Heart right ventricle (tissue), 16 donors: ENCODE measurements at regions of chr16 and their contacts with region 1.

Region 1: DNA sequence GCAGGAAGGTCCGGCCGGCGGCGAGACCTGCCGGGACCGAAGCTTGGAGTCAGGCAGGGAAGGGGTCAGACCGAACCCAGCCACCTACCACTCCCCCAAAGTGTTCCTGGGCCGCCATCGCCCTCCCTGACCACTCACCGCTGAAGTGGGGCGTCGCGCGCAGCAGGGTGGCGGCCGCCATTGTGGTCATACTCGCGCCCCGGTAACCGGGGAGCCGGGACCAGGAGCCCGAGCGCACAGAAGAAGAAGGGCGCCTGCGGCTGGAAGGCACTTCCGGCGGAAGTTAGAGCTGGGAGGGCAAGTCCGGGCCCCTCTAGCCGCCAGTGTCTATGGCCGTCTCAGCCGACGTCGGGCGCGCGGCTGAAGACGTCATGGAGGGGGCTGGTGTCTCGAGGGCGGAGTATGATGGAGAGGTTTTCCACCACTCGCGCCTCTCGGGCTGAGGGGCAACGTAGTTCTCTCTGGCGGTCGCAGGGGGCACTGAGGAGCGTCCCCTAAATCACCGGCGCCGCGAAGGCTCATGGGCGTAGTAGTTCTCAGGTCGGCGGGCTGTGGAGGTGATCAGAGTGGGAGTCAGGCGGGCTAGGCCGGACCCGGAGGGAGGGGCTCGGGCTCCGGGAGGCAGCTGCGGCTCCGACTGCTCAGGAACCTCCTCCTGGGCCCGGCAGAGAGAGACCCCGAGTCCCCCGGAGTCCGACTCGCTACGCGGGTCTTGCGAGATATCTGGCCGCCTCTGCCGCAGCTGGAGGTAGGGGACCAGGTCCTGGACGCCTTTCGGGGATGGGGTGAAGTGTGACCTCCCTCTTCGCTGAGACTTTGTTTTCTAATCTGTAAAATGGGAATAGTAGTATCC is at the start of gene TUFM:
- DNase-seq: peak; percentile 98 to 99
- ATAC-seq: peak; percentile 98 to 99 (median 99)
- H3K4me3 ChIP-seq: peak within 1 kb of the TSS; percentile 79 to 94 (median 86)
- H3K27ac ChIP-seq: peak within 1 kb of the TSS; percentile 48 to 90 (median 88)
- H3K4me1 ChIP-seq: peaks cover 5 to 27% (median 23%) of the 10 kb centered on the region in 9 donors
- H3K27me3 ChIP-seq: no peaks in the 10 kb centered on the region
- CTCF ChIP-seq: peak; percentile 34 to 86 (median 80)
- total RNA-seq, gene TUFM: 193 to 250 (median 236) TPM

Region 2: DNA sequence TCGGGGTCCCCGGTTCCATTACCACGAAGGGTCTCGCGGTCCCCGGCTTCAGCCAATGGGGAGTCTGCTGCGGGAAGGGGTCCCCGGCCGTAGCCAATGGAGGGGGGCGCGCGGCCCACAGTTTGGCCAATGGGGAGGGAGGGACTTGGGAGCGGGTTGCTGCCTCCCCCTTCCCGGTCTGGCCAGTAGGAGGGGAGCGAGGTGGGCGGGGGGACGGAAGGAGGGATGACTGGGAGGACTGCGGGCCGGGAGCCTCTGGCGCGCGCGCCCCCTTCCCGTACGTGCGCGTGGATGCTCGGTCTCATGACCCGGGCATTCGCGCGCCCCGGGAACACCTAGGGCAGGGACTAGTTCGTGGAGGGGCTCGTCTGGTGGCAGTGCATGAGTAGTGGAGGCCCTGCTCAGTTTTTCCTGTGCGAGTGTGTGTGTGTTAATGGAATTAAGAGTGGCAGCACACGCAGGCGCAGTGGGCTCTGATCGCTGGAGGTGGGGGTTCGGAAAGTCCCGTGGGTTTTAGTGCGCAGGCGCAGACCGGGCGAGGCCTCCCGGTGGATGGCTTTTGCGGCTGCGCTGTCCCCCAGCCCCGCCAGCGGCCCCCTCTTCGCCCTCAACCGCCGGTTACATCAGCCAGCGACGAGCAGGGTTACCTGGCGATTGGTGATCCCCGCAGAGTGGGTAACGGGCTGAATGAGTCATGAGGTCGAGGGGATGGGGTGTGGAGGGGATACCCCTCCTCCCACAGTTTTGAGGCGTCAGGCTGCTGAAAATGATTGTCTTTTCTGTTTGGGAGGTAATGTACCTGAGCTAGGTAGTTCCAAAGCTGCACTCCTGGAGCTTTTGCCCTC is 22.2 kb before region 1 on chr16:
- intact Hi-C with region 1: loop called in 5 of 10 experiments (anchors 1 to 2 kb)
- DNase-seq: peak; percentile 97 to 99
- ATAC-seq: peak; percentile 92 to 97 (median 95)
- H3K4me3 ChIP-seq: peak overlapping the region; percentile 79 to 100 (median 100)
- H3K27ac ChIP-seq: peak overlapping the region; percentile 92 to 100 (median 100)
- H3K4me1 ChIP-seq: peaks cover 8 to 34% (median 23%) of the 10 kb centered on the region in 9 donors
- H3K27me3 ChIP-seq: no peaks in the 10 kb centered on the region
- CTCF ChIP-seq: peak in 7 of 9 donors; percentile 24 to 49 (median 39)

Region 3: DNA sequence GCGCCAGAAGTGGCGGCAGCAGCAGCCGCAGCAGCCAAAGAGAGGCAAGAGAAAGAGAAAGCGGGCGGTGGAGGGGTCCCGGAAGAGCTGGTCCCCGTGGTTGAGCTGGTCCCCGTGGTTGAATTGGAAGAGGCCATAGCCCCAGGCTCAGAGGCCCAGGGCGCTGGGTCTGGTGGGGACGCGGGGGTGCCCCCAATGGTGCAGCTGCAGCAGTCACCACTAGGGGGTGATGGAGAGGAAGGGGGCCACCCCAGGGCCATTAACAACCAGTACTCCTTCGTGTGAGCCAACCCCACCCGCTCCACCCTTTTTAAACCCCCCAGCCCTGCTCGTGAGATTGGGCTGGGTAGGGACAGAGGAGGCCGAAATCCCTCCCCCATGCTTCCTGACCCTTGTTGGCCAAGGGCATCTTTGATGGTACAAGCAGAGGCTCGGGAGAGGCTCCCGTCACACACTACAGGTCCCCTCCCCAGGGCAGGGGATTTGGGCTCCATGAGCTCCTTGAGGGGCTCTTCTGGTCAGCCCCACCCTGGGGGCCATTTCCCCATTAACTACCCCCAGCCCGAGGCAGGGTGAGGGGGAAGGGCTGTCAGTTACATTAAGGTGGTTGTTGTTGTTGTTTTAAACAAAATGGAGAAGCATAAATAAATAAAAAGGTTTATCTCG is 27.4 kb after region 1 on chr16:
- intact Hi-C with region 1: loop called in 1 of 10 experiments (anchors 2 kb)
- DNase-seq: no peak
- ATAC-seq: peak in 3 of 8 donors; percentile 11 to 34 (median 26)
- H3K4me3 ChIP-seq: no peak overlapping the region
- H3K27ac ChIP-seq: no peak overlapping the region
- H3K4me1 ChIP-seq: peaks cover 0 to 1% (median 0%) of the 10 kb centered on the region in 9 donors
- H3K27me3 ChIP-seq: no peaks in the 10 kb centered on the region
- CTCF ChIP-seq: peak; percentile 24 to 75 (median 55)

Region 4: DNA sequence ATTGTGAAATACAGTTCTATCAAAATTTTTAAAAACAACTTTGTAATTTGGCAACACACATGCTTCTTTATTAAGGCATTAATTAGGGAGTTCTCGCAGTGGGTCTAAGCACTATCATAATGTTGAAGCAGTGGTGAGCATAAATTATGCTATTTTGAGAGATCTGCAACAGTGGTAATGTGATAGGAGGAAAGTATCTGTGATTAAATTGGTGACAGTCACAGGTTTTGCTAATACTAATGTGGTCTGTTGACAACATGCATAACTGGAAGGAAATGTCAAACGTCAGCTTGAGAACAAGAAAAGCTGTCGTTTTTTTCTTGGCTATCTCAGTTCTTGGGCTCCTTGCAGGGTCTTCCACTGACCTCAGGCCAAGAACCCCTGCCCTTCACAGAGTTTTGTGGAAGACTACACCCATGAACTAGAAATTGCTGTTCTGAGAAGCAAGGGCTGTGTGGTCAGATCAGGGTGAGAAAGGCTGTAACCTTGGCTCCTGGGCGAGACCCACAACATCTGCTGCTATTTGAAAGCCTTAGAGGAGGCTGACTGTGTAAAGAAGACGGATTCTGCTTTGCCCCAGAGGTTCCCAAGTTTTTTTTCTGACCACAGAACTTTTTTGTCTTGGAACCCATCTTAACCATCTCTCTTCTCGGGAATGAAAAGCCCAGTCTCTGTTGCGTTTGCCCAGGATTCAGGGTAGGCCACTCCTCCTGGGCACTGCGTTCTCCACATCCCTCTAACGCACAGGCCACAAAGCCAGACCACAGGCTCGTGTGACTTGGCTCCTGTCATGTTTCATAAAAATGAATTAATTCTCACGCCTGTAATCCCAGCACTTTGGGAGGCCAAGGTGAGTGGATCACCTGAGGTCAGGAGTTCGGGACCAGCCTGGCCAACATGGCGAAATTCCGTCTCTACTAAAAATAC is 45.9 kb after region 1 on chr16:
- intact Hi-C with region 1: no loop called
- DNase-seq: no peak
- ATAC-seq: no peak
- H3K4me3 ChIP-seq: no peak overlapping the region
- H3K27ac ChIP-seq: no peak overlapping the region
- H3K4me1 ChIP-seq: no peaks in the 10 kb centered on the region
- H3K27me3 ChIP-seq: no peaks in the 10 kb centered on the region
- CTCF ChIP-seq: no peak